ENCODE measurements at regions of chr1 and their contacts with region 1.

Region 1: DNA sequence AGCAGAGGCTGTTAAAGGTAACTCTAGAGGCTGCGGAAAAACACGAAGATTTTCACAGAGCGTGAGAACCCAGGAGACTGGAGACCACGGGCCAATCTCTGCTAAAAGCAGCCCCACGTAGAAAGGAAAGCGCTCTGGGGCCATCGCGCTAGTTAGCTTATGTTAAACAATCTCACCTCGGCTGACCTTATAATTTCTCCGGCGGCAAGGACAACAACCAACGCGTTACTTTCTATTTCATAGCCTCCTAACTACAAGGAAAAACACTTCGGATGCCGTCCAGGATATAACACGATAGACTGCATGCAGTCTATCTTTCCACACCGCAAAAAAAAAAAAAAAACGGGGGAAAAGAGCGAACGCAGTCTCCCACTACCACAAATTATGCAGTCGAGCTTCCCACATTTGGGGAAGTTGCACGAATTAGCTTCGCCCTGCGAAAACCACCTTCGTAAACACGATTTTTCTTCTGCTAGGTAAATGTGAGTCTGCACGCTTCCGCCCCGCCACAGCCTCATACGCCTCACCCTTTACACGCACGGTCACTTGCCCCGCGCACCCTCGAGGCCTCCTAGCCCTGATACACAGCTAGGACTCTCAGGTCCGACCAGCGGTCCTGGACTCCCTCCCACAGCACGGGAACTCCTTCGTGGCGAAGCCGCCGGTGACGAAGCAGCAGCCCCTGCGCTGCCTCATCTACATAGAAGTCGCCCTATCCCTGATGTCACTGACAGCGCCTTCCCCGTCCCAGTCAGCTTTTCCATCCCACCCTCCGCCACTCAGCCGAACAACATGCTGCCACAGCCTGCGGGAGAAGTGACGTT is 87.8 kb downstream of the PRKAB2 start:
- DNase-seq: peak; percentile 75
- ATAC-seq: peak; percentile 75
- H3K4me3 Mint-ChIP-seq: peak overlapping the region; percentile 95
- H3K27ac Mint-ChIP-seq: peak overlapping the region; percentile 100
- H3K4me1 Mint-ChIP-seq: peaks cover 27% of the 10 kb centered on the region
- H3K27me3 Mint-ChIP-seq: peaks cover 66% of the 10 kb centered on the region
- CTCF ChIP-seq: no peak

Region 2: GRCh38 chr1:147072370-147073061 is 12.0 kb before region 1 on chr1:
- CTCF ChIA-PET with region 1: interaction called, 3 read pairs
- POLR2A ChIA-PET with region 1: interaction called, 15 read pairs
- DNase-seq: peak; percentile 57
- ATAC-seq: peak; percentile 89
- H3K4me3 Mint-ChIP-seq: peak overlapping the region; percentile 90
- H3K27ac Mint-ChIP-seq: no peak overlapping the region
- H3K4me1 Mint-ChIP-seq: peaks cover 12% of the 10 kb centered on the region
- H3K27me3 Mint-ChIP-seq: peaks cover 90% of the 10 kb centered on the region
- CTCF ChIP-seq: no peak

Region 3: DNA sequence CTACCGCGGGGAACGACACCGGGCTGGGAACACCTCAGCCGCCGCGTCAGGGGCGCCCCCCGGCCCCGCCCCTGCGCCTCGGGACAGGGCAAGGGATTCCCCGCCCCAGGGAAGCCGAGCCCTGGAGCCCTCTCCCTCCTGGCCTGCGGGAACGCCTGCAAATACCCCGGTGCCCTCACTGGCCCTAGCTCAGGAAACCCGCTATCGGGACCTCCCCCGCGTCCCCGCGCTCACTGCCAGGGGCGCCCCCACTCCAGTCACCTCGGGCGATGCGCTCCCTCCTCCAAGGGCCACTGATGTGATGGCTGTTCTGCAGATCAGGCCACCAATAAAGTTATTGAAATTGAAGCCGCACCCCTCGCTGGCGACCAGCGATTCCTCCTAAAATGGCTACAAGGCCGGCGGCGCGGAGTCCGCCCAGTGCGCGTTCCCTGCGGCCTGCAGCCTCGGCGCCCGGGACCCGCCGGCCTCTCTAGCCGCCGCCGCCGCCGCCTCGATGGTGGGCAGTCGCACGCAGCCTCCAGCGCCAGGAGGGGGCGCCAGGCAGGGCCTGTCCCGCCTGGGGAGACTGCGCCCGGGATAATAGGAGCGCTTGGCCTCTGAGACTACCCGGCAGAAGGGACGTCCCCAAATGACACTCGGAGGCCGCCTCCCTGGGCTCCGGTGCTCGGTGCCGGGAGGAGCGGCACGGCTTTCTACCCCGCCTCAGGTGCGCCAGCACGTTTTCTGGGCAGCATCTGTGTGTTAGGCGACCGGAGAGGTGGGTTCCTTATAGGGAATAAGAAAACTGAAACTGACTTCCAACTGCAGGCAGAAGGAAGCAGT is 87.9 kb after region 1 on chr1 and contains the start of gene PRKAB2:
- CTCF ChIA-PET with region 1: no interaction called
- POLR2A ChIA-PET with region 1: interaction called, 12 read pairs
- DNase-seq: peak; percentile 95
- ATAC-seq: peak; percentile 92
- H3K4me3 Mint-ChIP-seq: peak within 1 kb of the TSS; percentile 95
- H3K27ac Mint-ChIP-seq: peak within 1 kb of the TSS; percentile 99
- H3K4me1 Mint-ChIP-seq: peaks cover 47% of the 10 kb centered on the region
- H3K27me3 Mint-ChIP-seq: no peaks in the 10 kb centered on the region
- CTCF ChIP-seq: peak; percentile 75
- total RNA-seq, gene PRKAB2: 22.6 to 28.3 TPM (median 27.8 TPM) in 3 replicates

Region 4: GRCh38 chr1:147213271-147213670 is 128.8 kb after region 1 on chr1:
- CTCF ChIA-PET with region 1: no interaction called
- POLR2A ChIA-PET with region 1: no interaction called
- DNase-seq: no peak
- ATAC-seq: no peak
- H3K4me3 Mint-ChIP-seq: no peak overlapping the region
- H3K27ac Mint-ChIP-seq: no peak overlapping the region
- H3K4me1 Mint-ChIP-seq: peaks cover 3% of the 10 kb centered on the region
- H3K27me3 Mint-ChIP-seq: no peaks in the 10 kb centered on the region
- CTCF ChIP-seq: no peak

Region 5: DNA sequence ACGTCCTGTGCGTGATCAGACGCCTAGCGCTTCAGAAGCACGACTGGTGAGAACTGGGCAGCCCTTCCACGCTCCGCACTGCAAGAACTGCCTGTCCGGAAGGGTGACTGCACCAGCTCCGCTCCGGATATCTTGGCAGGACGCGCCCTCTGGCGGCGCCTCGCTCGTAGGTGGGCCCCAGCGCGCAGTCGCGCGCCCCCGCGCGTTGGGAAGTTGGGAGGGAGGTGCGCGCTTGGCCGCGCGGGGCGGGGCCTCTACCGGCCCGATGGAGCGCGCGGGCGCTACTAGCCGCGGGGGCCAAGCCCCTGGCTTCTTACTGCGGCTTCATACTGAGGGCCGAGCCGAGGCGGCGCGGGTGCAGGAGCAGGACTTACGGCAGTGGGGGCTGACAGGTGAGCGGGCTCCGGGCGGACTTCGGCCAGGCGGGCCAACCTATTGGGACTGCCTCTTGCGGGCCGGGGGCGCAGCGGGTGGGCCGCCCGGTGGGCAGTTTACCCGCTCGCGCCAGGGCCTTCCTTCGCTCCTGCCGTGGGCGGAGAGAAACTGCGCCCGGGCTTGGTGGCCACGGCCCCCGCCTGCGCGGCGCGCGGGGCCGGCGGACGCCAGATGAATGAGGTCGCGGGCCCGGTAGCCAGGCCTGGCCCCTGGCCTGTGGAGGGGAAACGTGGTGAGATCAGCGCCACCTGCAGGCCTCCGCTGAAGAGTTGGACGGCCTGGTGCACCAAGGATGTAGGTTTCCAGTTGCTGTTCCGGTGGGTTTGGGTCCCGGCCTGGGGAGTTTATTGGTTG is 158.1 kb after region 1 on chr1 and contains the start of gene CHD1L:
- CTCF ChIA-PET with region 1: interaction called, 9 read pairs
- POLR2A ChIA-PET with region 1: interaction called, 19 read pairs
- DNase-seq: peak; percentile 92
- ATAC-seq: peak; percentile 83
- H3K4me3 Mint-ChIP-seq: peak within 1 kb of the TSS; percentile 79
- H3K27ac Mint-ChIP-seq: peak within 1 kb of the TSS; percentile 85
- H3K4me1 Mint-ChIP-seq: peaks cover 73% of the 10 kb centered on the region
- H3K27me3 Mint-ChIP-seq: no peaks in the 10 kb centered on the region
- CTCF ChIP-seq: peak; percentile 58
- total RNA-seq, gene CHD1L: 68.7 to 80.8 TPM (median 80.6 TPM) in 3 replicates

Measured in WTC11 (cell line).